ENCODE measurements at regions of chr12 and their contacts with region 1.

Region 1: GRCh38 chr12:93019975-93020630 is 91.0 kb upstream of the EEA1 start:
- DNase-seq: peak; percentile 98
- ATAC-seq: peak; percentile 94
- H3K4me3 ChIP-seq: peak overlapping the region; percentile 19 to 59 (median 31); a peak in 4 of 6 replicates
- H3K27ac ChIP-seq: peak overlapping the region; percentile 94
- H3K4me1 ChIP-seq: peaks cover 98% of the 10 kb centered on the region
- H3K27me3 ChIP-seq: no peaks in the 10 kb centered on the region
- CTCF ChIP-seq: no peak
- EP300 ChIP-seq: peak; percentile 83 to 94; a peak in 3 of 4 replicates
- POLR2A ChIP-seq: no peak; a peak in 1 of 4 replicates
- RAD21 ChIP-seq: peak; percentile 23; the same call in 1 of the 2 replicates

Region 2: DNA sequence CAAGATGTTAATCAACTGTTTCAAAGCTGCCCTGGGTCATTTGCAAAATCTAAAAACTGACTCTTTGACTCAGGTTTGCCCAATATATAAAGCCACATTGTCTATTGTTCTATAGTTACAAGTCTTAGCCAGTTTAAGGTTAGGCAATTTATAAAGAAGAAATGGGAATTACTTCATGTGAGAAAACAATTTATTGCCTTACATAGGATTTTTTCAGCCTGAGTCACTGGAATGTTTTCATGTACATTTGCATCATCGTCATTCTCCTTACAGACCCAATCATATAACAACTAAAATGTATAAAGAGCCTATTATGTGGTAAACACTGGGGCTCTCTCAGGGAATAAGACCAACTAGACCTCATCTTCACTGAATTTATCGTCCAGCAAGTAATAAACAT is 417.6 kb before region 1 on chr12:
- CTCF ChIA-PET with region 1: no interaction called
- POLR2A ChIA-PET with region 1: no interaction called
- in situ Hi-C with region 1: no loop called
- intact Hi-C with region 1: no loop called
- DNase-seq: no peak
- ATAC-seq: no peak
- H3K4me3 ChIP-seq: no peak overlapping the region
- H3K27ac ChIP-seq: no peak overlapping the region
- H3K4me1 ChIP-seq: no peaks in the 10 kb centered on the region
- H3K27me3 ChIP-seq: no peaks in the 10 kb centered on the region
- CTCF ChIP-seq: no peak
- EP300 ChIP-seq: no peak
- POLR2A ChIP-seq: no peak
- RAD21 ChIP-seq: no peak

Region 3: GRCh38 chr12:92899388-92900001 is 120.6 kb before region 1 on chr12:
- CTCF ChIA-PET with region 1: no interaction called
- POLR2A ChIA-PET with region 1: no interaction called
- in situ Hi-C with region 1: no loop called
- intact Hi-C with region 1: no loop called
- DNase-seq: peak; percentile 85
- ATAC-seq: peak; percentile 97
- H3K4me3 ChIP-seq: peak overlapping the region in 1 of 3 experiments; percentile 11; a peak in 1 of 6 replicates
- H3K27ac ChIP-seq: peak overlapping the region; percentile 48
- H3K4me1 ChIP-seq: peaks cover 25% of the 10 kb centered on the region
- H3K27me3 ChIP-seq: no peaks in the 10 kb centered on the region; a peak in 1 of 5 replicates
- CTCF ChIP-seq: no peak
- EP300 ChIP-seq: no peak
- POLR2A ChIP-seq: no peak
- RAD21 ChIP-seq: no peak

Region 4: GRCh38 chr12:92943482-92944250 is 76.4 kb before region 1 on chr12:
- CTCF ChIA-PET with region 1: no interaction called
- POLR2A ChIA-PET with region 1: interaction called, 6 read pairs
- in situ Hi-C with region 1: no loop called
- intact Hi-C with region 1: loop called (anchors 10 kb)
- DNase-seq: peak; percentile 66
- ATAC-seq: peak; percentile 60
- H3K4me3 ChIP-seq: no peak overlapping the region
- H3K27ac ChIP-seq: peak overlapping the region; percentile 86
- H3K4me1 ChIP-seq: peaks cover 66% of the 10 kb centered on the region
- H3K27me3 ChIP-seq: no peaks in the 10 kb centered on the region
- CTCF ChIP-seq: peak; percentile 46
- EP300 ChIP-seq: 0 out of 4 replicates have a peak, but pooled peaks of 1 of the 2 experiments have one; percentile 7
- POLR2A ChIP-seq: no peak
- RAD21 ChIP-seq: no peak

Region 5: GRCh38 chr12:93002293-93003054 is 17.6 kb before region 1 on chr12:
- CTCF ChIA-PET with region 1: no interaction called
- POLR2A ChIA-PET with region 1: interaction called, 132 read pairs
- in situ Hi-C with region 1: no loop called
- intact Hi-C with region 1: loop called (anchors 1 kb)
- DNase-seq: no peak
- ATAC-seq: no peak
- H3K4me3 ChIP-seq: no peak overlapping the region
- H3K27ac ChIP-seq: no peak overlapping the region
- H3K4me1 ChIP-seq: peaks cover 57% of the 10 kb centered on the region
- H3K27me3 ChIP-seq: no peaks in the 10 kb centered on the region
- CTCF ChIP-seq: no peak
- EP300 ChIP-seq: no peak
- POLR2A ChIP-seq: no peak
- RAD21 ChIP-seq: no peak

Region 6: DNA sequence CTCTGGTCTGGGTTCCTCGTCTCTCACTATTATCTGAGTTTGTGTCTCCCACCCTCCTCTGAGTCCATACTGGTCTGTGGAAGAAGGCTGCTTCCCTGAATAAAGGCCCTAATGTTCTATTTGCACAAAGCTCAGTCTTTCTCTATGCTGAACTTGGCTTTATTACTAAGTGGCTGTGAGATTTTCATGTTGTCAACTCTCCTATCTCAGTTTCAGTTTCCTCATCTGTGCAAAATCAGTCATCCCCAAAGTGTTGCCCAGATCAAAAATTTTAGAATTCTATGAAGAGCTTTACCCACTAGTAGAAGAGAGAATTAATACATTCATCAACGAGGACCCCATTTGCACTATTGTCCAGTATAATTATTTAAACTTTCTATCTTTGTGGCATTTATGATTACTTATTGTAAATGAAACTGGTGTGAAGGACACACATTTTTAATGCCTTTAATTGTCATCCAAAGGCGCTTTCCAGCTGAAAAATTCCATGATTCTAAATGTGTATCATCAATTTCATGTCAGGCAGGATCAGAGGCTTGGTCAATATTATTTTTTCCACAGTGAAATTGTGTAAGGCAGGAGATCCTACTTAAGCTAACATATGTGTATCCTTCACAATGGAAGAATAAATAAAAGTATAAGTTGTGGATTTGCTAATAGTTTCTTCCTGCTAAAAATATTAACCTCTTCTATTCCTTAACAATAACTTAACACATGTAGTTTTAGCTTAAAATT is 11.9 kb before region 1 on chr12:
- CTCF ChIA-PET with region 1: no interaction called
- POLR2A ChIA-PET with region 1: interaction called, 132 read pairs
- in situ Hi-C with region 1: no loop called
- intact Hi-C with region 1: loop called (anchors 1 kb)
- DNase-seq: peak; percentile 62
- ATAC-seq: no peak
- H3K4me3 ChIP-seq: peak overlapping the region; percentile 25 to 68 (median 50); a peak in 5 of 6 replicates
- H3K27ac ChIP-seq: peak overlapping the region; percentile 89
- H3K4me1 ChIP-seq: peaks cover 79% of the 10 kb centered on the region
- H3K27me3 ChIP-seq: no peaks in the 10 kb centered on the region
- CTCF ChIP-seq: no peak
- EP300 ChIP-seq: no peak; a peak in 1 of 4 replicates
- POLR2A ChIP-seq: no peak
- RAD21 ChIP-seq: no peak

Region 7: GRCh38 chr12:93089805-93090569 is 69.9 kb after region 1 on chr12:
- CTCF ChIA-PET with region 1: no interaction called
- POLR2A ChIA-PET with region 1: interaction called, 12 read pairs
- in situ Hi-C with region 1: no loop called
- intact Hi-C with region 1: loop called (anchors 5 kb)
- DNase-seq: no peak
- ATAC-seq: no peak
- H3K4me3 ChIP-seq: no peak overlapping the region
- H3K27ac ChIP-seq: no peak overlapping the region
- H3K4me1 ChIP-seq: peaks cover 88% of the 10 kb centered on the region
- H3K27me3 ChIP-seq: no peaks in the 10 kb centered on the region
- CTCF ChIP-seq: no peak
- EP300 ChIP-seq: no peak
- POLR2A ChIP-seq: no peak
- RAD21 ChIP-seq: no peak

Region 8: DNA sequence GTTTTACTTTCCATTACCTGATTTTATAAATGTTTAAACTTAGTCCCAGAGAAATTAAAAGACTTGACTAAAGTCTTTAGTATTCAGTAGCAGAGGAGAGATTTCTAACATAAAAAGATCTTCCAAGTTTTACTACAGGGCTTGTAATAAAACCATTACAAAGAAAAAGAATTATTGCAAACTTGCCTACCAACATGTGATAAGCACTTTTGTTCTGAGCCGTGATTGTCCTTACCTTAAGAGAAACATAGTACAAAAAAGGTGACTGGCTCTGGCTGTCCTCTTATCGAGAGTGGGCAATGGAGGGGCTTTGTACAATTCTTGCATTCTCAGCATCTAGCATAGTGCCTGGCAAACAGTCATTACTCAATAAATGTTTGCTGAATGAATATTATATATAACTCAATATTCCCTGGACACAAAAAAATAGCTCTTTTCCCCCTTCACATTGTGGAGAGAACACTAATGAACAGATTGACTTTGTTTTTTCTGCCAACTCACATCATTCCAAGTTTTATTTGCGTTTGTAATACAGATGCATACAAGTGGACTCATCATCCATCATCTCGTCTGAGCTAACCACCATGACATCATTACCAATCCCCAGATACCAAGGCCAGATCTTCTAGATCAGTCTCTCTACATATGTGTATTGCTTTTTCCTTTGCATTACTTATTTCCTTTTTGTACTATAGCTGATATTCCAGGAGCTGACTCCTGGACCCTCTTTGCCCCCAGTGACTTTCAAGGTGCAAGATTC is 101.8 kb after region 1 on chr12:
- CTCF ChIA-PET with region 1: interaction called, 6 read pairs
- POLR2A ChIA-PET with region 1: interaction called, 29 read pairs
- in situ Hi-C with region 1: loop called (anchors 5 kb)
- intact Hi-C with region 1: loop called (anchors 2 kb)
- DNase-seq: peak; percentile 64
- ATAC-seq: peak; percentile 60
- H3K4me3 ChIP-seq: peak overlapping the region; percentile 3 to 52 (median 17); a peak in 3 of 6 replicates
- H3K27ac ChIP-seq: peak overlapping the region; percentile 71
- H3K4me1 ChIP-seq: peaks cover 83% of the 10 kb centered on the region
- H3K27me3 ChIP-seq: no peaks in the 10 kb centered on the region
- CTCF ChIP-seq: no peak
- EP300 ChIP-seq: no peak
- POLR2A ChIP-seq: no peak
- RAD21 ChIP-seq: no peak

Region 9: GRCh38 chr12:93317227-93317626 is 297.1 kb after region 1 on chr12:
- CTCF ChIA-PET with region 1: no interaction called
- POLR2A ChIA-PET with region 1: no interaction called
- in situ Hi-C with region 1: loop called (anchors 10 kb)
- intact Hi-C with region 1: no loop called
- DNase-seq: peak; percentile 84
- ATAC-seq: peak; percentile 37
- H3K4me3 ChIP-seq: no peak overlapping the region; a peak in 1 of 6 replicates
- H3K27ac ChIP-seq: peak overlapping the region; percentile 69
- H3K4me1 ChIP-seq: peaks cover 81% of the 10 kb centered on the region
- H3K27me3 ChIP-seq: no peaks in the 10 kb centered on the region
- CTCF ChIP-seq: no peak
- EP300 ChIP-seq: peak in 1 of 2 experiments; percentile 56; a peak in 2 of 4 replicates
- POLR2A ChIP-seq: no peak
- RAD21 ChIP-seq: no peak